Activated naive CD8-positive, alpha-beta T cell treated with anti-CD3 and anti-CD28 coated beads, Interleukin-2, amount 10 ng/mL, durations not matched to agents 7 days and 5 days (primary cell): ENCODE measurements at regions of chr2 and their contacts with region 1.

Region 1: GRCh38 chr2:219253753-219254590 is at the start of gene TUBA4A:
- DNase-seq: peak; percentile 94
- ATAC-seq: peak; percentile 69
- H3K4me3 Mint-ChIP-seq: peak within 1 kb of the TSS; percentile 99
- H3K27ac Mint-ChIP-seq: peak within 1 kb of the TSS; percentile 90
- H3K4me1 Mint-ChIP-seq: peaks cover 40% of the 10 kb centered on the region
- H3K27me3 Mint-ChIP-seq: no peaks in the 10 kb centered on the region
- total RNA-seq, gene TUBA4A: 237 to 266 TPM

Region 2: GRCh38 chr2:219206442-219207253 is 47.3 kb before region 1 on chr2 and contains the start of gene ZFAND2B:
- POLR2A ChIA-PET with region 1: interaction called, 34 read pairs
- DNase-seq: peak; percentile 99
- ATAC-seq: peak; percentile 97
- H3K4me3 Mint-ChIP-seq: peak within 1 kb of the TSS; percentile 85
- H3K27ac Mint-ChIP-seq: peak within 1 kb of the TSS; percentile 93
- H3K4me1 Mint-ChIP-seq: peaks cover 47% of the 10 kb centered on the region
- H3K27me3 Mint-ChIP-seq: no peaks in the 10 kb centered on the region
- total RNA-seq, gene ZFAND2B: 68.1 to 69.8 TPM

Region 3: DNA sequence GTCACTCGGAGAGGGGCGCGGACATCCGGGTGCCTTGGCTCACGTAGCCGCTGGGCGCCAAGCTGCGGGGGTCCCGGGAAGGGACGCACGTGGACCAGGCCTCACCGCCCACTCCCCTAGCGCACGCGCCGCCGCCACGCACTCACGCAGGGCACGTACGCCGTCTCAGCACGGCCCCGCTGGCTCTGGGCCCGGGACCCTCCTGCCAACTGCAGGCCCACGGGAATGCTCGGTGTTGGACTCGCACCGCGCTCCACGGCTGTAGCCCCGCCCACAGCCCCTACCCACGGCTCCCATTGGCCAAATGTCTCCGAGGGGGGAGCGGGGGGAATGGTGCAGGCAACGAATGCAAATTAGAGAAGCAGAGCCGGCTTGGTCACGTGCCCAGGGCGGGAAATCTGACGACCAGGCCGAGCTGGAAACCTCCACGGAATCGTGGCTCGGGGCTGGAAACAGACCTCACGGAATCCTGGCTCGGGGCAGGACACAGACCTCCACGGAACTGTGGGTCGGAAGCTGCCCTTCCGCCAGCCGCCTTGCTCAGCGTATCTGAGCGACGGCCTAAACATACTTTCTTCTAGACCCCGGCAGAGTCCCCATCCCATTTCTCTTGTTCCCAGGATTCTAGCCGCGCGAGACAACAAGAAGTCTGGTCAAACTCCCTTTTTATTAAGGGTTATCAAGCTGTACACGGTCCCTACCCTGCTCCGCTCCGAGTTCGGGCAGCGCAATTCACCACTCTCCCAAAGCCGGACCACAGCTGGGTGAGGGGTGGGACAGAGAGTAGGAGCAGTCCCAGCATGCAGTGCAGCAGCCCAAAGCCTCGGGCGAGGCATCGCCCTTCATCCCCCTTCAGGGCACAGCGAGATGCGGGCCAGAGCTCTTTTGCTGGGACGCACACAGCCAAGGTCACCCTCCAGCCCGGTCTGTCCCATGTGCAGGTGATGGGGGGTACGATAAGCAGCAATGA is 35.0 kb before region 1 on chr2 and contains the start of gene ABCB6:
- POLR2A ChIA-PET with region 1: interaction called, 18 read pairs
- DNase-seq: peak; percentile 82
- ATAC-seq: peak; percentile 86
- H3K4me3 Mint-ChIP-seq: peak within 1 kb of the TSS; percentile 82
- H3K27ac Mint-ChIP-seq: peak within 1 kb of the TSS; percentile 65
- H3K4me1 Mint-ChIP-seq: peaks cover 15% of the 10 kb centered on the region
- H3K27me3 Mint-ChIP-seq: no peaks in the 10 kb centered on the region
- total RNA-seq, gene ABCB6: 13.1 to 14.3 TPM

Region 4: DNA sequence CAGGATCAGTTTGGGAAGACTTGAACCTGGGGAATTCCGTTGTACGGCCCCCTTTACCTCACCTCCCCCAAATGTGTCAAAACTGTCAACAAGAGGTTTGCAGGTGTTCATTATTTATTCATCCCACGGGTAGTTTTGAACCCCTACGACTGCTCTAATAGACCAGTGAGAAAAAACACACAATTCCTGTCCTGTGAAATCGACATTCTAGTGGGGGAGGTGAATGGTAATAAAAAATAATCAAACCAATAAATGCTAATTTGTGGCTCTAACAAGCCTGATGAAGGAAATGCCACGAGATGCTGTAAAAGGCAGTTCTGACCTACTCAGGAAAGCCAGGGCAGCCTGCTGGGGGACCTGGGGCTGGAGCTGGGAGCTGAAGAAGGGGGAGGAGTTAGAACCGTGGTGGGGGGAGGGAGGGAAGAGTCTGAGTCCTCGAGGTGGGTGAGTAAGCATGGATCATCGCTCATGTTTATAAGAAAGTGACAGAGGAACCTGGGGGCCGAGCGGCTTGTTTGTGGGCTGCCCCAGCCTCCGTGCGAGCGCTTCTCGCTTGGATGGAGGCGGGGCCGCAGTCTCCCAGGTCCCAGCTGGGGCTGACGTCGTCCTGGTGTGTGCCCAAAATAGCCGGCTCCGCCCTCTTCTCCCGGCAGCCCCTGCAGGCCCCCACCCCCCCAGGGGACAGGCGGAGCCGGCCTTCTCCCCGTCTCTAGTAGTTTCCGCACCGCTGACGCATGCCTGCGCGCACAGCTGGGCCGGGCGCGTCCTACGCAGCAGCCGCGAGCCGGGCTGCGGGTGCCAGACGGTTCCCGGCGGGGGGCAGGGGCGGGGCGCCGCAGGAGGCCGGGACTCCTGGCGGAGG is 24.9 kb after region 1 on chr2 and contains the start of gene DNAJB2:
- POLR2A ChIA-PET with region 1: interaction called, 66 read pairs
- DNase-seq: peak; percentile 97
- ATAC-seq: peak; percentile 91
- H3K4me3 Mint-ChIP-seq: peak within 1 kb of the TSS; percentile 98
- H3K27ac Mint-ChIP-seq: peak within 1 kb of the TSS; percentile 99
- H3K4me1 Mint-ChIP-seq: peaks cover 38% of the 10 kb centered on the region
- H3K27me3 Mint-ChIP-seq: peaks cover 4% of the 10 kb centered on the region
- total RNA-seq, gene DNAJB2: 65.9 to 67.5 TPM

Region 5: GRCh38 chr2:219294356-219295351 is 40.7 kb after region 1 on chr2:
- POLR2A ChIA-PET with region 1: interaction called, 27 read pairs
- DNase-seq: peak; percentile 95
- ATAC-seq: peak; percentile 92
- H3K4me3 Mint-ChIP-seq: peak overlapping the region; percentile 84
- H3K27ac Mint-ChIP-seq: peak overlapping the region; percentile 70
- H3K4me1 Mint-ChIP-seq: peaks cover 23% of the 10 kb centered on the region
- H3K27me3 Mint-ChIP-seq: peaks cover 8% of the 10 kb centered on the region

Region 6: DNA sequence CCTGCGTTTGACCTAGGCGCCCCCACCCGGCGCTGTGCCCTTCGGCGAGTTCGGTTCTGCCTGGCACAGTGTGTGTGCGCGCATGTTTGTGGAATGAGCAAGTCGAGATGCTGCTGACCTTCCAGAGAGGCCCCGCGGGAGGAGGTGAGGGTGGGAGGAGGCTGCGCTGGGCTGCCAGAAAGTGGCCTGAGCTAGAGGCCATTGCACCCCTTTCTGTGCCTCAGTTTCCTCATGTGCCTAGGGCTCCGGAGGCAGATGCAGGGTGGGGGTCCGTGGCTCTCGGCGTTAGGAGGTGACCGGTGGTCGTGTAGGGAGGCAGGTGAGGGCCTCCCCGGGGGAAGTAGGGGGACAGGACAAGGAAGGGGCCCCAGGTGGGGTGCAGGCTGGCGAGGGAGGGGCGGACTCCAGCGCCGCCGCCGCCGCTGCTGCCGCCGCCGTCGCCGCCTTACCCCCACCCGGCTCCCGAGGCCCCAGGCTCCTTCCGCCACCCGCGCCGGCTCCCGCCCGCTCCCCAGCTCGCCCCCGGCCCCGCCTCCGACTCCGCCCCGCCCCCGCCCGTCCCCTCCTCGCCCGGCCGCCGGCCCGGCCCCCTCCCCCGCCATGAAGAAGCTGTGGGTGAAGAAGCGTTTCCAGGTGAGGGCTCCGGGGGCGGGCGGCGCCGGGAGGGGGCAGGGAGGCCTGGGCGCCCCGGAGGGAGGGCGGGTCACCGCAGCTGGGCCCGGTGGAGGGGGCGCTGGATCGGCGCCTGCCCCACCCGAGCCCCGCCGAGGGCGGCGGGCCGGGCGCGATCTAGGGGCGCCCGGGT is 187.7 kb after region 1 on chr2:
- POLR2A ChIA-PET with region 1: no interaction called
- DNase-seq: peak; percentile 70
- ATAC-seq: peak; percentile 60
- H3K4me3 Mint-ChIP-seq: peak overlapping the region; percentile 81
- H3K27ac Mint-ChIP-seq: peak overlapping the region; percentile 57
- H3K4me1 Mint-ChIP-seq: peaks cover 10% of the 10 kb centered on the region
- H3K27me3 Mint-ChIP-seq: peaks cover 27% of the 10 kb centered on the region